Cardiac septum (tissue), 1 donor: ENCODE measurements at regions of chr5 and their contacts with region 1.

Region 1: GRCh38 chr5:133025804-133026663 is at the start of gene ZCCHC10:
- DNase-seq: peak; percentile 97
- total RNA-seq, gene ZCCHC10: 19.9 TPM

Region 2: DNA sequence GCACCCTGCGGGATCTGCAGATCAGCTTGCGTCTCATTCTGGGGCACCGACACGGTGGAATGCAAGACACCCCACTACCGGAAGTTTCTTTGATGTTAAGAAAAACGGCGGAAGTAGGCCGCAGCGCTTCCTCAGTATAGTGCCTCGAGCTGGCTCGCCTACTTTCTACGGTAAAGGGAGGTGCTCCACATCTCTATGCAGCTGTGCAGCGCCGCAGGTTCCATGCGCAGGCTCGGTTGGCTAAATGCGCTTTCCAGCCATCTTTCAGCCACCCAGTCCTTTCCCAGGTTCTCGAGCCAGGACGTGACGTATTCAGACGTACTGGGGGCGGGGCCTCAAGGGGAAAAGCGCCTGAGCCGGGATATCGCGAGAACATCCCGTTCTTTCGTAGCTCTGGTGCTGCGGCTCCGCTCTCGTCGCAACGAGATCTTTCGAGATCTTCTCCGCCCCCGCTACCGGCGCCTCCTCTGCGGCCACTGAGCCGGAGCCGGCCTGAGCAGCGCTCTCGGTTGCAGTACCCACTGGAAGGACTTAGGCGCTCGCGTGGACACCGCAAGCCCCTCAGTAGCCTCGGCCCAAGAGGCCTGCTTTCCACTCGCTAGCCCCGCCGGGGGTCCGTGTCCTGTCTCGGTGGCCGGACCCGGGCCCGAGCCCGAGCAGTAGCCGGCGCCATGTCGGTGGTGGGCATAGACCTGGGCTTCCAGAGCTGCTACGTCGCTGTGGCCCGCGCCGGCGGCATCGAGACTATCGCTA is 25.7 kb after region 1 on chr5 and contains the start of gene HSPA4:
- intact Hi-C with region 1: loop called (anchors 1 kb)
- DNase-seq: peak; percentile 99
- total RNA-seq, gene HSPA4: 142 TPM

Region 3: GRCh38 chr5:133353741-133354140 is 327.7 kb after region 1 on chr5:
- intact Hi-C with region 1: no loop called
- DNase-seq: no peak